ENCODE measurements at regions of chr11 and their contacts with region 1.

Region 1: GRCh38 chr11:63838678-63839507 is at the start of gene MARK2:
- DNase-seq: peak; percentile 82 to 98
- ATAC-seq: peak; percentile 80 to 90
- H3K4me3 ChIP-seq: peak within 1 kb of the TSS; percentile 75
- H3K27ac ChIP-seq: peak within 1 kb of the TSS; percentile 95 to 97
- H3K4me1 ChIP-seq: peaks cover 36% of the 10 kb centered on the region
- CTCF ChIP-seq: no peak
- EP300 ChIP-seq: no peak
- POLR2A ChIP-seq: peak; percentile 77
- RAD21 ChIP-seq: no peak
- polyA plus RNA-seq, gene MARK2: 24.7 and 28.4 TPM in 2 replicates

Region 2: GRCh38 chr11:63478896-63479295 is 360.0 kb before region 1 on chr11:
- CTCF ChIA-PET with region 1: no interaction called
- POLR2A ChIA-PET with region 1: no interaction called
- DNase-seq: peak; percentile 71 to 85
- ATAC-seq: peak; percentile 95
- H3K4me3 ChIP-seq: no peak overlapping the region
- H3K27ac ChIP-seq: peak overlapping the region; percentile 1 to 53; a peak in 2 of 6 replicates
- H3K4me1 ChIP-seq: no peaks in the 10 kb centered on the region; the same call in 2 of the 3 replicates
- CTCF ChIP-seq: peak; percentile 96
- EP300 ChIP-seq: no peak
- POLR2A ChIP-seq: no peak
- RAD21 ChIP-seq: peak; percentile 98 to 100

Region 3: DNA sequence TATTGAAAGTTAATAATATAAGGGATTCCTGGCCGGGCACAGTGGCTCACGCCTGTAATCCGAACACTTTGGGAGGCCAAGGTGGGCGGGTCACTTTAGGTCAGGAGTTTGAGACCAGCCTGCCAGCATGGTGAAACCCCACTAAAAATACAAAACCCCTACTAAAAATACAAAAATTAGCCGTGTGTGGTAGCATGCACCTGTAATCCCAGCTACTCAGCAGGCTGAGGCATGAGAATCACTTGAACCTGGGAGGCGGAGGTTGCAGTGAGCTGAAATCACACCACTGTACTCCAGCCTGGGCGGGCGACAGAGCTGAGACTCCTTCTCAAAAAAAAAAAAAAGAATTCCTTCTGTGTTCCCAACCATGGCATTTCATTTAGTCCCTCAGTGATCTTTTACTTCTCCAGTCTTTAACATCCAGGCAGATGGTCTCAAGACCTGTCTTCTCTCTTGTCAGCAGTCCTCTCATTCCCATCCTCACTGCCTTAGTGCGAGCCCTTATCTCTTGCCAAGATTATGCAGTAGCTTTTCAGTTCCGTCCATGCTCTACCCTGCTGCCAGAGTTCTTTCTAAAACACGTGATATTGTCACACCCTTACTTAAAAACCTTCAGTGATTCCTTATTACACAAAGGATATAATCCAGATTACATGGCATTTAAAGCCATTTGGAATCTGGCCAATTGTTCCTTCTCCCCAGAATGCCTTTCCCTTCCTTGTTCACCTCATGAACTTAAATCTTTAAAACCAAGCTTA is 139.7 kb before region 1 on chr11:
- CTCF ChIA-PET with region 1: no interaction called
- POLR2A ChIA-PET with region 1: no interaction called
- DNase-seq: no peak
- ATAC-seq: no peak
- H3K4me3 ChIP-seq: no peak overlapping the region
- H3K27ac ChIP-seq: no peak overlapping the region
- H3K4me1 ChIP-seq: no peaks in the 10 kb centered on the region
- CTCF ChIP-seq: no peak
- EP300 ChIP-seq: no peak
- POLR2A ChIP-seq: no peak
- RAD21 ChIP-seq: no peak

Region 4: GRCh38 chr11:63855975-63856749 is 17.3 kb after region 1 on chr11:
- CTCF ChIA-PET with region 1: interaction called, 40 read pairs
- POLR2A ChIA-PET with region 1: interaction called, 3 read pairs
- DNase-seq: no peak
- ATAC-seq: no peak
- H3K4me3 ChIP-seq: no peak overlapping the region
- H3K27ac ChIP-seq: no peak overlapping the region; a peak in 1 of 6 replicates
- H3K4me1 ChIP-seq: peaks cover 32% of the 10 kb centered on the region
- CTCF ChIP-seq: no peak
- EP300 ChIP-seq: no peak
- POLR2A ChIP-seq: no peak
- RAD21 ChIP-seq: no peak

Region 5: GRCh38 chr11:63882555-63883242 is 43.8 kb after region 1 on chr11:
- CTCF ChIA-PET with region 1: interaction called, 32 read pairs
- POLR2A ChIA-PET with region 1: interaction called, 4 read pairs
- DNase-seq: no peak
- ATAC-seq: peak; percentile 15 to 21; a peak in 2 of 6 replicates
- H3K4me3 ChIP-seq: no peak overlapping the region
- H3K27ac ChIP-seq: no peak overlapping the region
- H3K4me1 ChIP-seq: peaks cover 26% of the 10 kb centered on the region; the same call in 2 of the 3 replicates
- CTCF ChIP-seq: no peak
- EP300 ChIP-seq: no peak
- POLR2A ChIP-seq: no peak
- RAD21 ChIP-seq: no peak

Region 6: DNA sequence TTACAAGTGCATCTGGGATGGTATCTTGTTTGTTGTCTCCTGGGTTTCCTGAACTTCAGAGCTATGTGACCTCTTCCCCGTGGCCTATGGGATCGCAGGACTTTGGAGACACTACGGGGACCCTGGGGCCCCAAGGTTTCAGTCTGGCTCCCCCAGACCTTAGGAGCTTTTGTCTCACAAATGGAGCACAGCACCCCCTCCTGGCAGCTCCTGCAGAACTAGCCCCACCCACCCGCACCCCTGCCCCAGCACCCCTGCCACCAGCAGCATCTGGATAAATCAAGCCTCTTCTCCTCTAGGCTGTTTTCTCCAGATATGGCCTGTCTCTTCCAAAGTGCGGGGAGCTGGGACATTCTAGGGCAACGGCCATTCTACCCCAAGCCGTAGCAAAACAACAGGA is 67.7 kb after region 1 on chr11:
- CTCF ChIA-PET with region 1: interaction called, 58 read pairs
- POLR2A ChIA-PET with region 1: interaction called, 9 read pairs
- DNase-seq: no peak
- ATAC-seq: peak in 1 of 2 experiments; percentile 30; a peak in 3 of 6 replicates
- H3K4me3 ChIP-seq: no peak overlapping the region
- H3K27ac ChIP-seq: no peak overlapping the region
- H3K4me1 ChIP-seq: 0 out of 3 replicates have a peak, but pooled peaks cover 4% of the 10 kb centered on the region
- CTCF ChIP-seq: peak; percentile 40
- EP300 ChIP-seq: no peak
- POLR2A ChIP-seq: no peak
- RAD21 ChIP-seq: peak; percentile 17 to 42; a peak in 3 of 5 replicates

Region 7: DNA sequence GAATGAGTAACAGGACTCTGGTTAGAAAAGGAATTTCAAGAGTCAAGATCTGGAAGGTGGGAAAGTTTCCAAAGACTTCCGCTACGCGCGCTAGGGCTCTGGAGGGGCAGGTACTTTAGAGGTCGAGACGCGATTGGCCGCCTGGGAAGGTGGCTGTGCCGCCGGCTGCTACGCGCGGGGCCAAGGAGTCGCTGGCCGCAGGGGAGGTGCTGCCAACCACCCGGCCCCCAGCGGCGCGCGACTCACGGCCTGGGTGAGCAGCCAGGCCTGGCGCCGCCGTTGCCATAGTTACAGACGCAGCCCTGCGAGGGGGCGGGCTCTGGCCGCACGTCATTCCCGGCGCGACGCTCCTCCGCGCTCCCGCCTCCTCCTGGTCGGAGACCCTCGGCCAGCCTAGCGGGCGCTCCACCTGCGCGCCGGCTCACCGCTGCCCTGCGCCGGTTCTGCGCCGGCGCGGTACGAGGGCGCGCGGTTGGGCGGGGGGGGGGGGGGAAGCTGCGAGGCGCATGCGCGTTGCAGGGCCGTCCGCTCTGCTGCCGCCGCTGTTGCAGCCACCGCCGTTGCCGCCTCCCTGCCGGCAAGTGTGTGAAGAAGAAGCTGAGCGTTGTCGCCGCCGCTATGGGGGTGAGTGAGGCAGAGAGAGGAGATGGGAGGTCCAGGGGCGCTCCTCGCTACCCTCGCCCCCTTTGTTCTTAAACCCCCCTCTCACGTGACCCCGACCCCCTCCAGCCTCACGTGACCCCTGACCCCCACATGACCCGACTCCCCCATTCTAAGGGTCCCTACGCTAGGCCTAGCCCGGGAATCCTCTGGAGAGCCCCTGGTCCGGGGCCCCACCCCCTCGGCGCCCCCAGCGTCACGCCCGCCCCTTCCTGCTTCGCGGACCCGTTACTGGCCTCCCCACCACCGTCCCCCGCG is 99.8 kb after region 1 on chr11 and contains the start of gene NAA40:
- CTCF ChIA-PET with region 1: interaction called, 236 read pairs
- POLR2A ChIA-PET with region 1: interaction called, 6 read pairs
- DNase-seq: peak; percentile 98
- ATAC-seq: peak; percentile 97
- H3K4me3 ChIP-seq: peak within 1 kb of the TSS; percentile 82
- H3K27ac ChIP-seq: peak within 1 kb of the TSS; percentile 88 to 97
- H3K4me1 ChIP-seq: peaks cover 11% of the 10 kb centered on the region
- CTCF ChIP-seq: no peak
- EP300 ChIP-seq: no peak
- POLR2A ChIP-seq: peak; percentile 84
- RAD21 ChIP-seq: no peak
- polyA plus RNA-seq, gene NAA40: 21.9 and 23.7 TPM in 2 replicates

Region 8: GRCh38 chr11:64152841-64153691 is 314.2 kb after region 1 on chr11:
- CTCF ChIA-PET with region 1: interaction called, 63 read pairs
- POLR2A ChIA-PET with region 1: no interaction called
- DNase-seq: peak; percentile 45 to 94
- ATAC-seq: peak; percentile 81 to 95
- H3K4me3 ChIP-seq: no peak overlapping the region
- H3K27ac ChIP-seq: no peak overlapping the region
- H3K4me1 ChIP-seq: no peaks in the 10 kb centered on the region
- CTCF ChIP-seq: peak; percentile 93
- EP300 ChIP-seq: no peak
- POLR2A ChIP-seq: no peak
- RAD21 ChIP-seq: peak; percentile 72 to 79